Activated naive CD4-positive, alpha-beta T cell treated with anti-CD3 and anti-CD28 coated beads for 36 hours (primary cell): ENCODE measurements at regions of chr20 and their contacts with region 1.

Region 1: DNA sequence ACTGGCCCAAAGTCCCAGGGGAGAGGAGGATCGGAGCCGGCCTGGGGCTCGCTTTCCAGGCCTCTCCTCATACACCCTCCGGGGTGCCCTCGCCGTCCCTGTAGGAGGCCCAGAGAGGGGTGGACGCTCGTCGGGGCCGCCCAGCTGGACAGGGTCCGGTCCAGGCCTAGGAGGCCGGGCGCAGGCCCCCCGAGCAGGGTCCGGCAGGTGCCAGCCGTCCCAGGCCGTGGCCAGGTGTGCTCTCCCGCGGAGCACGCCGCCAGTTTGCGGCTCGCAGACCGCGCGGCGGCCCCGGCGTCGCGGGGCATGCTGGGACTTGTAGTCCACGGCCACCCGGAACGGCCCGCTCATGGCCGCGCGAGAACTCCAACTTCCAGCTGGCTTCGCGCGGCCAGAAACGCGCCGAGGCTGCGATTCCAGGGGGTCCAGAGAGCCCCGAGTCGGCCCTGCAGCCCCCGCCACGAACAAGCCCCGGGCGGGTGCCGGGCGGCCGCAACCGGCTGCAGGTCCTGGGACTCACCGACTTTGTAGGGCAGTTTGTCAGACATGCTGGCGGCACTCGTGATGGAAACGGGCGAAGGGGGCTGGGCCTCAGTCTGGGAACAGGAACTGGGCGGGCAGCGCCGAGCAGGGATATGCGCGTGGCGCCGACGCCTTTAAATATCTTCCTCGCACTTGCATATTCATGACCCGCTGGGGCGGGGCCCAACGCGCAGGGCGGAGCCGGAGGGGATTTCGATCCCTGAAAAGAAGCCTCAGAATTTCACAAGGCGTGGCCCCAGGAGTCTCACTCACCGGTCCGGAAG is at the start of gene AHCY:
- DNase-seq: peak; percentile 95
- H3K4me3 Mint-ChIP-seq: peak within 1 kb of the TSS; percentile 84
- H3K27ac Mint-ChIP-seq: peak within 1 kb of the TSS; percentile 86
- H3K4me1 Mint-ChIP-seq: peaks cover 4% of the 10 kb centered on the region
- H3K27me3 Mint-ChIP-seq: no peaks in the 10 kb centered on the region
- total RNA-seq, gene AHCY: 258 to 261 TPM

Region 2: GRCh38 chr20:32743237-32744112 is 1559.5 kb before region 1 on chr20 and contains the start of gene COMMD7:
- CTCF ChIA-PET with region 1: no interaction called
- intact Hi-C with region 1: loop called (anchors 5 kb)
- DNase-seq: peak; percentile 93
- H3K4me3 Mint-ChIP-seq: peak within 1 kb of the TSS; percentile 94
- H3K27ac Mint-ChIP-seq: peak within 1 kb of the TSS; percentile 95
- H3K4me1 Mint-ChIP-seq: peaks cover 34% of the 10 kb centered on the region
- H3K27me3 Mint-ChIP-seq: no peaks in the 10 kb centered on the region
- total RNA-seq, gene COMMD7: 33.8 to 36.6 TPM

Region 3: GRCh38 chr20:33773412-33774089 is 529.4 kb before region 1 on chr20:
- CTCF ChIA-PET with region 1: no interaction called
- intact Hi-C with region 1: no loop called
- DNase-seq: peak; percentile 54
- H3K4me3 Mint-ChIP-seq: no peak overlapping the region
- H3K27ac Mint-ChIP-seq: no peak overlapping the region
- H3K4me1 Mint-ChIP-seq: peaks cover 7% of the 10 kb centered on the region
- H3K27me3 Mint-ChIP-seq: no peaks in the 10 kb centered on the region

Region 4: DNA sequence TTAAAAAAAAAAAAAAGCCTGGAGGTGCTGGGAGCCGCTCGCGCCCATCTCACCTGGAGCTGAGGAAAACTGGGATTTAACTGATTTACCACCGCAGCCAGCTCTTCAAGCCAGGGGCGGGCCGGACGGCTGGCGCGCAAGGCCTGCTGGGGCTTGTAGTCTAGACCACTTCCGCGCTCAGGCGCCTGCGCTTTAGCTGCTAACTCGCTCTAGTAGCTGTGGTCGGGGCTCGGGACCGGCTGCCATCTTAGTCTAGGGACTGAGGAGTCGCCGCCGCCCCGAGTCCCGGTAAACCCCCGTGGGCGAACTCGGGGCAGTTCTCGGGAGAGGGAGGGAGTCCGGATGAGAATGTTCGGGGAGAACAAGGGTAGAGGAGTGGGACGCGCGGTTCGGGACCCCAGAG is 60.1 kb after region 1 on chr20 and contains the start of gene ITCH:
- CTCF ChIA-PET with region 1: interaction called, 4 read pairs
- intact Hi-C with region 1: loop called (anchors 1 kb)
- DNase-seq: peak; percentile 96
- H3K4me3 Mint-ChIP-seq: peak within 1 kb of the TSS; percentile 97
- H3K27ac Mint-ChIP-seq: peak within 1 kb of the TSS; percentile 95
- H3K4me1 Mint-ChIP-seq: peaks cover 34% of the 10 kb centered on the region
- H3K27me3 Mint-ChIP-seq: no peaks in the 10 kb centered on the region
- total RNA-seq, gene ITCH: 35.3 to 40.0 TPM

Region 5: DNA sequence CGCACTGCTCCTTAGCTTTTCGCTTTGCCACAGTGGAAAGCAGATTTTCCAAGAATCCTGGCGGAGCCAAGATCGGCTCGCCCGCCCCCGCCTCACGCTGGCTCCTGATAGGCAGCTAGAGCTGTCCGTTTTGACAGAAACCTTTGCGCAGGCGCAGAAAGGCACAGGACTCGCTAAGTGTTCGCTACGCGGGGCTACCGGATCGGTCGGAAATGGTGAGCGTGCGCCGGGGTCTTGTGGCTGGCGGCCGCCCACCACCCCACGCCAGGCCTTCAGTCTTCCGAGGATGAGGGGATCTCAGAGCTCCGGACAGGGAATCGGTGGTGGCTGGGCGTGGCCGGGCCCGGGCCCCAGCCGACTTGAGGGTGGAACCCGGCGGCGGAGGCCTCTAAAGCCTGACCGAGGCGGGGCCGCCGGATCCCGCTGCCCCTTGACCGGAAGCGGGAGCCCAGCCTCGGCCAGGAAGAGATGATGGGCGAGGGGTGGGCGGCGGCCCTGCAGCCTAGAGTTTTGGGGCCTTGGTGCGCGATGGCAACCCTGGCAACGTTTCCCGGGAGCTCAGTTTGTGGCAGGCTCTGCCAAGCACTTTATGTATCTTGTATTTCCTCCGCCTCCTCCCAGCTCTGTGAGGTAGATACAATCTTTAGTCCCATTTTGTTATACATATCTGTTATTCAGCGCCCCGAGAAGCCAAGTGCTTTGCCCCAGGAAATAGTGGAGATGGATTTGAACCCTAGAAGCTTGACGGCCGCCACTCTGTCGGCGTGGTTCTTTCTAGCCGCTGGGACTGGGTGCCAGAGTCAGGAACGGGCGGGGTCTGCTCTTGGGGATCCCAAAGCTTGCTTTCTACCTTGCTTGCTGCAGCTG is 213.6 kb after region 1 on chr20 and contains the start of gene DYNLRB1:
- CTCF ChIA-PET with region 1: interaction called, 11 read pairs
- intact Hi-C with region 1: loop called (anchors 1 kb)
- DNase-seq: peak; percentile 96
- H3K4me3 Mint-ChIP-seq: peak within 1 kb of the TSS; percentile 98
- H3K27ac Mint-ChIP-seq: peak within 1 kb of the TSS; percentile 96
- H3K4me1 Mint-ChIP-seq: peaks cover 29% of the 10 kb centered on the region
- H3K27me3 Mint-ChIP-seq: no peaks in the 10 kb centered on the region
- total RNA-seq, gene DYNLRB1: 81.9 to 92.9 TPM

Region 6: DNA sequence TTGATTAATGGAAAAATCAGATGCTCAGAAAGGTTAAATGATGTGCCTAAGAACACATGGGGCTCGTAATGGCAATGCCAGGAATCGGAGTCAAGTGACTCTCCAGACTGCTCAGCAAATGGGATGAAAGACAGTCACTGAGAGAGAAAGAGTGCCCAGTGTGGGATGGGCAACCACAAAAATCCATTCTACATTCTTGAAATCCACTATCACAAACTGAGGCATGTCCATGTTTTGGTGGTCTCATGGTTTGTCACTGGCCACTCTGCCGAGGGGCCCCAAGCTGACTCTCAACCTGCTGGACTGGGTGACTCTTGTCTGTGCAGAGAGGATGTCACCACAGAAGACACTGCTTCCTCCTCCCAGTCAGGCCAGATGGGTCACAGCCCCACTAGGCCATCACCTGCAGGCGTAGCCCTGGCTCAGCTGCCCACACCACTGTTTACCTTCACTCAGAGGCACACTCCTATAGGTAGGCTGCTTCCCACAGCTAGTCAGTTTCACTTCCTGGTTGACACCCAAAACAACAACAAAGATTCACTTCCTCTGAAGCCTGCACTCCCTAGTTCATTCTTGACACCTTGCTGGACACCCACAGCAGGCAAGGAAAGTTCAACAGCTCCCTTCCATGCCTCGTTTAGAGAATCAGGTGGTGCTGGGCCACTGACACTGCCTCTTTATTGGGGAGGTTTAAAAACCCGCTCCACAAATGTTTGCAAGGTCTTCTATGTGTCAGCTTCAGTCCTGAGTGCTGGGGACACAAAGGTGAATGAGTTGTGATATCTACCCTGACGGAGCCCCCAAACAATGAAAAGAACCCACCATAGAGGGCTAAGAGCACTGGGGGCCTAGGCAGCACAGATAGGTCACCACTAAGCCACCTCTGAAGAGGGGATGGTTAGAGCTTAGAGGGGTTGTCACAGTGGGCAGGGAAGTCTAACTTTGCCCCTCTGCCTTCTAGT is 277.3 kb after region 1 on chr20:
- CTCF ChIA-PET with region 1: no interaction called
- intact Hi-C with region 1: loop called (anchors 1 kb)
- DNase-seq: peak; percentile 26
- H3K4me3 Mint-ChIP-seq: no peak overlapping the region
- H3K27ac Mint-ChIP-seq: peak overlapping the region; percentile 94
- H3K4me1 Mint-ChIP-seq: peaks cover 24% of the 10 kb centered on the region
- H3K27me3 Mint-ChIP-seq: no peaks in the 10 kb centered on the region

Region 7: GRCh38 chr20:34825530-34826362 is 522.8 kb after region 1 on chr20 and contains the start of gene NCOA6:
- CTCF ChIA-PET with region 1: no interaction called
- intact Hi-C with region 1: loop called (anchors 1 kb)
- DNase-seq: peak; percentile 88
- H3K4me3 Mint-ChIP-seq: peak within 1 kb of the TSS; percentile 97
- H3K27ac Mint-ChIP-seq: peak within 1 kb of the TSS; percentile 93
- H3K4me1 Mint-ChIP-seq: peaks cover 37% of the 10 kb centered on the region
- H3K27me3 Mint-ChIP-seq: no peaks in the 10 kb centered on the region
- total RNA-seq, gene NCOA6: 13.9 to 14.1 TPM